Naive thymus-derived CD4-positive, alpha-beta T cell (primary cell): ENCODE measurements at regions of chr9 and their contacts with region 1.

Region 1: DNA sequence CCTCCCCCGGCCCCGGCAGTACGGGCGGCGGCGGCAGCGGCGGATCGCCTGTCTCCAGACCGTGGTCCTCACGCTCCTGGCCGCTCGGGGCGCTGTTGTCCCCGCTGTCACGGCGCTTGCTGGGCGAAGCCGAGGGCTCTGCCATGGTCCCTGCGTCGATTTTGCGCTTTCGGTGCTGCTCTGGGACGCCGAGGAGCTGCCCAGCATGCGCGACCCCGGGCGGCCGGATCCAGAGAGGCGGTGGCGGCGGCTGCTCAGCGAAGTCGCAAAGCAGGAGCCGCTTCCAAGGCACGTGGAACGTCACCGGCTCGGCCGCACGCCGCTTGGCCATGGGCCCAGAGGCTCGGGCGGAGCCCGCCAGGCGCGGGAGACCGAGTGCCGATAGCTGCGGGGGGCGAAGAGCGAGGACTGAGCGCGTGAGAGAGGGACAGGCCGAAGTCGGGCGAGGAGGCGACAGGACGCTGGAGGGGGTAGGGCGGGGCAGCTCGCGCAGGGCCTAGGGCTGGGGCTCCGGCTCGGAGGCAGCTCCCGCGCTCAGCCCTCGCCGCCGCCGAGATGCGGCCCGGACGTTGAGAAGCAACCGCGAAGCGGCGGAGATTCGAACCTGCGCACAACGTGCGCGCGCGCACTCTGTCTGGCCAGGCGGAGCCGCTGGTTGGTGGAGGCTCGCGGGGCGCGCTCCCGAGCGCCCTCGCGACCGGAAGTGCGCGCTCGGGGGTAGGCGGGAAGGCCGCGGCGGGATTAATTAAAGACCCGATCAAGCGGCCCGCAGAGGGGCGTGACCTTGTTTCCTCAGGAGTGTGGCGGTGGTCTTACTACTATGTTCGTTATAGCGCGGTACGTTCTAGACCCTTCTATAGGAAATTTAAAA is at the start of gene C9orf40:
- DNase-seq: peak; percentile 80 to 92 (median 88)
- ATAC-seq: peak; percentile 93
- H3K4me3 ChIP-seq: peak within 1 kb of the TSS; percentile 89
- H3K4me3 Mint-ChIP-seq: peak within 1 kb of the TSS; percentile 87 to 99 (median 97)
- H3K27ac ChIP-seq: peak within 1 kb of the TSS; percentile 86
- H3K27ac Mint-ChIP-seq: peak within 1 kb of the TSS; percentile 89 to 97 (median 95)
- H3K4me1 ChIP-seq: peaks cover 0 to 7% of the 10 kb centered on the region in 2 donors
- H3K4me1 Mint-ChIP-seq: peaks cover 0 to 46% (median 30%) of the 10 kb centered on the region in 7 donors
- H3K27me3 ChIP-seq: no peaks in the 10 kb centered on the region
- H3K27me3 Mint-ChIP-seq: no peaks in the 10 kb centered on the region
- total RNA-seq, gene C9orf40: 1.8 to 13.6 (median 6.6) TPM

Region 2: DNA sequence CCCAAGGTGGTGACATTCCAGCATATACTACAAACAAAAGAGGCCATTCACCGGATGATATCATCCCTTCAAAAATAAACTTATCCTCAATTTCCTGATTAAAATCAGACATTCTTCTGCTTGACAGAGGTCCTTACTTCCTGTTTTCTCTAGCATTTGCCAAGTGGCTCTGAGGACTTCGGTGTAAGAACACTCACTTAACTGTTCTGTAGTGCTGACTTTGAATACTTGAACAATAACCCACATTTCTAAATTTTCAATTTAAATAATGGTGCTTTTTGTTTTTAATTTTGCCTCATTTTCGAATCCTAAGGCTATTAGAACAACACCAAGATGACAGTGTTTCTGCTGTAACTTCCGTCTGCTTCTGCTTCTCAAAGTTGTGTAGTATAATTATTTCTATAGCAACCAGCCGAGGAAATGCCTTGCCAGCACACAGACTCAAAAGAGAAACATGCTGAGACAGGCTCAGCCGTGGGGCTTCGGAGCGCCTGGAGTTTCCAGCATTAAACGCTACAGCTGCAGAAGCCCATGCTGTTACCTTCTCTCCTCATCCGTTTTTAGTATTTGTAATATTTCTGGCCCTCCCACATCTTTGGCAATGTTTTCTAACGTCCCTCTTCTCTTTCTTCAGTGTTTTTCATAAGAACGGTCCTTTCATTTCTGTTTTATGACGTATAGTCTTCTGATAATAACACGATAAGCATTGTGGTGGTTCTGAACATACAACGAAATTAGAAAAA is 1820.3 kb before region 1 on chr9:
- CTCF ChIA-PET with region 1: no interaction called
- POLR2A ChIA-PET with region 1: no interaction called
- intact Hi-C with region 1: loop called in 1 of 2 experiments (anchors 10 kb)
- DNase-seq: peak; percentile 51 to 91 (median 85)
- ATAC-seq: peak; percentile 97
- H3K4me3 ChIP-seq: peak overlapping the region; percentile 78
- H3K4me3 Mint-ChIP-seq: peak overlapping the region; percentile 74 to 97 (median 90)
- H3K27ac ChIP-seq: peak overlapping the region; percentile 90
- H3K27ac Mint-ChIP-seq: peak overlapping the region; percentile 93 to 99 (median 95)
- H3K4me1 ChIP-seq: peaks cover 9% of the 10 kb centered on the region in 2 donors
- H3K4me1 Mint-ChIP-seq: peaks cover 20 to 47% (median 37%) of the 10 kb centered on the region in 7 donors
- H3K27me3 ChIP-seq: no peaks in the 10 kb centered on the region
- H3K27me3 Mint-ChIP-seq: no peaks in the 10 kb centered on the region

Region 3: GRCh38 chr9:74496819-74497747 is 455.4 kb before region 1 on chr9 and contains the start of gene RORB:
- CTCF ChIA-PET with region 1: no interaction called
- POLR2A ChIA-PET with region 1: no interaction called
- intact Hi-C with region 1: loop called in 1 of 2 experiments (anchors 10 kb)
- DNase-seq: peak in 2 of 9 donors; percentile 34 to 50
- ATAC-seq: peak; percentile 52
- H3K4me3 ChIP-seq: peak within 1 kb of the TSS; percentile 53
- H3K4me3 Mint-ChIP-seq: peak within 1 kb of the TSS; percentile 80 to 95 (median 88)
- H3K27ac ChIP-seq: no peak within 1 kb of the TSS
- H3K27ac Mint-ChIP-seq: peak within 1 kb of the TSS in 4 of 9 donors; percentile 30 to 75 (median 52)
- H3K4me1 ChIP-seq: no peaks in the 10 kb centered on the region
- H3K4me1 Mint-ChIP-seq: peaks cover 11 to 39% (median 33%) of the 10 kb centered on the region in 7 donors
- H3K27me3 ChIP-seq: peaks cover 0 to 8% of the 10 kb centered on the region in 2 donors
- H3K27me3 Mint-ChIP-seq: peaks cover 65 to 81% (median 66%) of the 10 kb centered on the region in 5 donors
- total RNA-seq, gene RORB: 0.12 TPM in 1 of 5 experiments, not detected in the others

Region 4: DNA sequence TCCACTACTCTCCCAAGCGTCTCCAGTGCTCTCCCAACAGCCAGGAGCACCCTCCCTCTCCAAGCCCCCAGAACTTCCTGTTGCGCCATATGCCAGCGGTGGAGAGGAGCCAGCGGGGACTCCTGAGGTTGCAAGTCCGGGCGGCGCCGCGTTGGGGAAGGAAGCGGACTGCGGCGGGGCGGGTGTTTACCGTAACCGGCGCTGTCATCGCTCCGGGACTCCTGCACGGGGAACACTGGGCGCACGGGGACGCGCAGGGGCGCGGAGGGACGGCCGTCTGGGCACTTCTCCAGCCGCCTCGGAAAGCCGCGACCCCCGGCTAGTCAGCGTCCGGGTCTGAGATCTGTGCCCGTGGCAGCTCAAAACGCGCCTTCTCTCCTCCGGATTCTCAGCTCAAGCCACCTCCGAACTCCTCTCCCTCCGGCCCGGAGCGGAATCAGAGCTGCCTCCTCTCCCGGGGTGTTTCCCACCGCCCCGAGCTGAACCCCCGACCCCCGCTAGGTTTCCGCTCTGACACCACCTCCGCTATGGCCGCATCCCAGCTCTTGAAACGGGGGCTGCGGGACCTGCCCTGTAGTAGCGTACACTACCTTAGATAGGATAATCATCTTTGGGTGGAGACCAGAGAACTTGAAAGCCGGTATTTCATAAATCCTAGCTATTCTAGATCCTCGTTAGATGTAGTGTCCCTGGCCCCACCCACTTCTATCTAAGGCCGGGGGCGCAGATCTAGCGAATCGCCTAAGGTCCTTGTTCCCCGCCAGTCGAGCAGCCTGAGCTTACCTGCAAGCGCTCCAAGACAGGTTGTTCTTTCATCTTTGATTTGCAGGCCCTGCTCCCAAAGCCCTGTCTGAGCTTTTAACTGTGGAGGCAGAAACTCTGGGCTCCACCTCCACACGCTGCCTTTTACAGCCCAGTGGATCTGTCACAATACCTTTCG is 65.2 kb before region 1 on chr9 and contains the start of gene TRPM6:
- CTCF ChIA-PET with region 1: no interaction called
- POLR2A ChIA-PET with region 1: no interaction called
- intact Hi-C with region 1: loop called in 1 of 2 experiments (anchors 5 kb)
- DNase-seq: peak in 6 of 9 donors; percentile 8 to 48 (median 22)
- ATAC-seq: peak; percentile 88
- H3K4me3 ChIP-seq: peak within 1 kb of the TSS; percentile 38
- H3K4me3 Mint-ChIP-seq: peak within 1 kb of the TSS; percentile 75 to 92 (median 88)
- H3K27ac ChIP-seq: no peak within 1 kb of the TSS
- H3K27ac Mint-ChIP-seq: peak within 1 kb of the TSS in 1 of 9 donors; percentile 52
- H3K4me1 ChIP-seq: peaks cover 4 to 7% of the 10 kb centered on the region in 2 donors
- H3K4me1 Mint-ChIP-seq: peaks cover 11 to 20% (median 18%) of the 10 kb centered on the region in 7 donors
- H3K27me3 ChIP-seq: peaks cover 7 to 18% of the 10 kb centered on the region in 2 donors
- H3K27me3 Mint-ChIP-seq: peaks cover 50 to 68% (median 57%) of the 10 kb centered on the region in 5 donors
- total RNA-seq, gene TRPM6: 0.85 to 3.6 TPM in 2 of 5 experiments, not detected in the others

Region 5: DNA sequence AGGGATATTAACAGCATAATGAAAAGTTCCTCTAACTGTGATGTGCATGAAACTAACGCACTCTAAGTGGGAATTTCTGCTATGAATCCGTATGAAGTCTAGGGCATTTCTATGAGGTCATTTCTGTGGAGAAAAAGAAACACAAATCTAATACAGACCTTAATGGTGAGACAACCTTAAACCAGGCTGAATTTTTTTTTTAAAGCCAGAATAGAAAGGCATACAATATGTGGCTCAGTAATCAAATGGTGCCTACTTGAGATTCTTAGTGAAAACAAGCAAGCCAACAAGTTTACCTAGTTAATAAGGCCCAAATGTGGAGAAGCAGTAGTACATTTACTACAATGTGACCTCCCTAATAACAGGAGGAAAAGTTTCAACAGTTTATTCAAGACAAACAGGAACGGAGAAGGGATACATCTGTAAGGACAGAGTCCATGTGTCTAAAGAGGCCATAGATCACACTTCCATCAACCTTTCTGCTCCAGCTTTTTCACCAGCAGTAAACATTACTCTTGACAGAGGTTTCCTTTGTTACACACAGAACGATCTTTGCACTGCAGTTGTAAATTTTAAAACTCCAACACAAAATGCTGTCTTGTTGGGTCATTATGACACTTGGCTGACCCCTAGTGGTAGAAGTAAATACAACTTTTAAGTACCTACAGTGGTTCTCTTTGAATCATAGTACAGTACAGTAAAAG is 49.4 kb after region 1 on chr9:
- CTCF ChIA-PET with region 1: interaction called, 7 read pairs
- POLR2A ChIA-PET with region 1: no interaction called
- intact Hi-C with region 1: loop called (anchors 1 to 2 kb)
- DNase-seq: peak in 7 of 9 donors; percentile 52 to 77 (median 68)
- ATAC-seq: peak; percentile 98
- H3K4me3 ChIP-seq: no peak overlapping the region
- H3K4me3 Mint-ChIP-seq: no peak overlapping the region
- H3K27ac ChIP-seq: no peak overlapping the region
- H3K27ac Mint-ChIP-seq: no peak overlapping the region
- H3K4me1 ChIP-seq: peaks cover 0 to 4% of the 10 kb centered on the region in 2 donors
- H3K4me1 Mint-ChIP-seq: peaks cover 0 to 8% (median 5%) of the 10 kb centered on the region in 7 donors
- H3K27me3 ChIP-seq: no peaks in the 10 kb centered on the region
- H3K27me3 Mint-ChIP-seq: no peaks in the 10 kb centered on the region

Region 6: GRCh38 chr9:75088260-75088905 is 135.9 kb after region 1 on chr9 and contains the start of gene OSTF1:
- CTCF ChIA-PET with region 1: interaction called, 5 read pairs
- POLR2A ChIA-PET with region 1: interaction called, 32 read pairs
- intact Hi-C with region 1: loop called (anchors 1 kb)
- DNase-seq: peak; percentile 89 to 95 (median 95)
- ATAC-seq: peak; percentile 93
- H3K4me3 ChIP-seq: peak within 1 kb of the TSS; percentile 76
- H3K4me3 Mint-ChIP-seq: peak within 1 kb of the TSS; percentile 89 to 100 (median 99)
- H3K27ac ChIP-seq: peak within 1 kb of the TSS; percentile 92
- H3K27ac Mint-ChIP-seq: peak within 1 kb of the TSS; percentile 91 to 98 (median 94)
- H3K4me1 ChIP-seq: peaks cover 29 to 49% of the 10 kb centered on the region in 2 donors
- H3K4me1 Mint-ChIP-seq: peaks cover 58 to 82% (median 78%) of the 10 kb centered on the region in 7 donors
- H3K27me3 ChIP-seq: no peaks in the 10 kb centered on the region
- H3K27me3 Mint-ChIP-seq: no peaks in the 10 kb centered on the region
- total RNA-seq, gene OSTF1: 38.7 to 93.5 (median 46.2) TPM

Region 7: DNA sequence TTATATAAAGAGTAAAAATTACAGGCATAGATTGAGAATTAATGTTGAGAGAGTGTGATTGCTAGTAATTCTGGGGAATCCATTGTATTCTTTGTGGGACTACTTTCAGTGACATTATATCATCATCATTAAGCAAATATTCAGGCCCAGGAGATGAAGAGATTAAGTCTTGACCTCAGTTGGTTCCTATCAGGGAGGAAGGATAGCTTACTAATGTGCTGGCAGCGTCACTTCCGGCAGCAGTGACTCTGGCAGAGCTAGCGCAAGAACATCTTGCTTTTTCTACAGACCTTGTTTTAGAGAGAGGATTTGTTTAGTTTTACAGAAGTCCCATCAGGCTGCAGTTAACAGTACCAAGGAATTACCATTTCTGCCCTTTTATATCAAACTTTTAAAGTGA is 156.0 kb after region 1 on chr9:
- CTCF ChIA-PET with region 1: no interaction called
- POLR2A ChIA-PET with region 1: no interaction called
- intact Hi-C with region 1: no loop called
- DNase-seq: no peak
- ATAC-seq: peak; percentile 74
- H3K4me3 ChIP-seq: no peak overlapping the region
- H3K4me3 Mint-ChIP-seq: peak overlapping the region in 2 of 10 donors; percentile 7 to 61
- H3K27ac ChIP-seq: no peak overlapping the region
- H3K27ac Mint-ChIP-seq: peak overlapping the region in 6 of 9 donors; percentile 0 to 69 (median 18)
- H3K4me1 ChIP-seq: peaks cover 3 to 17% of the 10 kb centered on the region in 2 donors
- H3K4me1 Mint-ChIP-seq: peaks cover 46 to 86% (median 75%) of the 10 kb centered on the region in 7 donors
- H3K27me3 ChIP-seq: no peaks in the 10 kb centered on the region
- H3K27me3 Mint-ChIP-seq: no peaks in the 10 kb centered on the region

Region 8: GRCh38 chr9:76023715-76024195 is 1071.2 kb after region 1 on chr9:
- CTCF ChIA-PET with region 1: no interaction called
- POLR2A ChIA-PET with region 1: no interaction called
- intact Hi-C with region 1: loop called (anchors 5 to 10 kb)
- DNase-seq: peak in 7 of 9 donors; percentile 69 to 87 (median 81)
- ATAC-seq: peak; percentile 93
- H3K4me3 ChIP-seq: peak overlapping the region; percentile 38
- H3K4me3 Mint-ChIP-seq: peak overlapping the region; percentile 68 to 86 (median 80)
- H3K27ac ChIP-seq: peak overlapping the region; percentile 76
- H3K27ac Mint-ChIP-seq: peak overlapping the region; percentile 77 to 99 (median 96)
- H3K4me1 ChIP-seq: peaks cover 10 to 96% of the 10 kb centered on the region in 2 donors
- H3K4me1 Mint-ChIP-seq: peaks cover 59 to 100% (median 98%) of the 10 kb centered on the region in 7 donors
- H3K27me3 ChIP-seq: no peaks in the 10 kb centered on the region
- H3K27me3 Mint-ChIP-seq: no peaks in the 10 kb centered on the region